Gastrocnemius medialis (tissue), 4 donors: ENCODE measurements at regions of chr1 and their contacts with region 1.

Region 1: DNA sequence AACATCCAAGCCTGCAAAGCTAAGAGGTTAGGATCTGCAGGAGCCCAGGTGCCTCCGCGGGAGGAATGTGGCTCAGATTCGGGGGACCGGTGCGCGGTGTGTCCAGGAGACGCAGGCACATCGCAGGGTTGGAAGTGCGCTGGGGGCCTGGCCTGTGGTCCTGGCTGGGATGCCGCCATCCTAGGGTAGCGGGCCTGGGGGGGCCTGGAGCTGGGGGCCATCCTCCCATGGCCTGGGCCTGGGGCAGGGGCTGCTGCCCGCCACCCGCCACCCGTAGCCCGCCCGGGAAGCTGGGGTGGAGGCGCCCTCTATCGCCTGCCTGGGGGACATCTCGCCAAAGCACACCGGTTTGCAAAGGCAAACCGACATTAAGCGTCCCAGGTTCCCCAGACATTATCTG is 170.6 kb upstream of the ARHGEF16 start:
- DNase-seq: no peak
- ATAC-seq: no peak
- H3K4me3 ChIP-seq: no peak overlapping the region
- H3K27ac ChIP-seq: no peak overlapping the region
- H3K4me1 ChIP-seq: no peaks in the 10 kb centered on the region
- H3K27me3 ChIP-seq: peaks cover 8 to 32% (median 26%) of the 10 kb centered on the region in 3 donors
- CTCF ChIP-seq: peak in 4 of 5 experiments; percentile 10 to 70 (median 56)
- POLR2A ChIP-seq: no peak

Region 2: DNA sequence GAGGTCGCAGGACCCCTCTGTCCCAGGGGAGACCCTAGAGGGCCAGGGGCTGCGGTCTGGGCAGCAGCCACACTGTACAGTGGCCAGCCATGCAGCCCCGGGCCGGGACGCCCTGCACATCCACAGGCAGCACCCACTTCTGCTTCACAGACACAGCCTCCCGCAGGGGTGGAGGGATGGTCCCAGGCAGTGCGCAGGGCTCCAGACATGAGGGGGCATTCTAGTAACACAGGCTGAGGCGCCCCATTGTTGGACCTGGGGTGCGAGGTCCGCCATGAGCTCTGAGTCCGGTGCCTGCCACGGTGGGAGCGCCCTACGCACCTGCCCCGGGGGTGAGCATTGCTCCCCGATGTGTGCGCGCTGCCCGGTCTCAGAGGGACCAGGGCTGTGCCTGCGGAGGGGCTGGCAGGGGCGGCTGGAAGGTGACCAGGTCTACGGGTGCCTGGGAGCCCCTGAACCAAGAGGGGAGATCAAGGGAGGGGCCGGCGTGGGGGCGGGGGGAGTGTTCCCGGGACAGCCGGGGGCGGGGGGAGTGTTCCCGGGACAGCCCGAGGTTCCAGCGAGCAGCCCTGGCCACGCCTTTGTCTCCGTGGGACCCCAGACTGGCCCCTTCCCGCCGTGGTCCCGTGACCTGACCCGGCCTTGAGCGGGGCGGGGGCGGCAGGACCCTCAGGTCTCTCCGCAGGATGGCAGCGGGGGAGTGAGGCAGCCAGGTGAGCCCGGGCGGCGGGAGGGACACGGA is 655.5 kb before region 1 on chr1:
- in situ Hi-C with region 1: no loop called
- intact Hi-C with region 1: no loop called
- DNase-seq: no peak
- ATAC-seq: no peak
- H3K4me3 ChIP-seq: no peak overlapping the region
- H3K27ac ChIP-seq: no peak overlapping the region
- H3K4me1 ChIP-seq: no peaks in the 10 kb centered on the region
- H3K27me3 ChIP-seq: peaks cover 31 to 60% (median 58%) of the 10 kb centered on the region in 3 donors
- CTCF ChIP-seq: no peak
- POLR2A ChIP-seq: no peak

Region 3: GRCh38 chr1:3069491-3070303 is 214.2 kb before region 1 on chr1:
- in situ Hi-C with region 1: no loop called
- intact Hi-C with region 1: loop called (anchors 1 kb)
- DNase-seq: no peak
- ATAC-seq: peak in 1 of 2 donors; percentile 55
- H3K4me3 ChIP-seq: peak overlapping the region; percentile 49 to 63 (median 59)
- H3K27ac ChIP-seq: peak overlapping the region in 1 of 4 donors; percentile 43
- H3K4me1 ChIP-seq: peaks cover 0 to 11% of the 10 kb centered on the region in 2 donors
- H3K27me3 ChIP-seq: peaks cover 76 to 88% (median 80%) of the 10 kb centered on the region in 3 donors
- CTCF ChIP-seq: no peak
- POLR2A ChIP-seq: no peak